ENCODE measurements at regions of chr19 and their contacts with region 1.

Region 1: DNA sequence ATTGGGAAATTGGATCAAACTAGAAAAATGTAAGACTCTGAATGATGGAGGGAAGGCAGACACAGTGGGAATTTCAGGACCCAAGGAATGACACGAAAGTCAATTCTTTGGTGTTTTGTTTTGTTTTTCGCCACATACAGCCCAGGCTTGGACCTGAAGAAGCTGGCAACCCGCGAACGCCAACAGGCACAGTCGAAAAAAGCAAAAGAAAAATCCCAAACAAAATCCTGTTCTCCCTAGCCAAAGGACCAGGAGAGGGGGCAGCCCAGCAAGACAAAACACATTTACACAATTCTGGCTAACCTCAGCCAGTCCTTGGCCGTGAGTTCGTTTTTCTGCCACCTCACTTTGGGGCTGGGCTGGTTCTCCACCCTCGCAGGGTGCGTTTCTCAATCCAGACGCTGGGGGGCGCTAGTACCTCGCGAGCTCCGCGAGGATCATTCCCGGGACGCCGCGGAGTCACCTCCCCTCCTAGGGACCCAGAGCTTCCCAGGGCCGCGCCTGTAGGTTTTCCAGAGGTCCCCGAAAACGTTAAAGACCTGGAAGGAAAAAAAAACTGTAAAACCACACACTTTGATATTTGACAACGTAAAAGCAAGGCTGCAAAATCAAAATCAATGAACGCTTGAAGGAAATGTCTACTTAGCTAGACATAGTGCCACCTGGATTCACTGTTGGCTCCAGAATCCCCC is 34.9 kb upstream of the TPM4 start:
- DNase-seq: peak; percentile 52
- ATAC-seq: peak; percentile 99
- H3K4me3 ChIP-seq: no peak overlapping the region
- H3K27ac ChIP-seq: peak overlapping the region; percentile 12
- H3K4me1 ChIP-seq: peaks cover 2% of the 10 kb centered on the region
- H3K27me3 ChIP-seq: no peaks in the 10 kb centered on the region
- CTCF ChIP-seq: peak; percentile 96
- POLR2A ChIP-seq: no peak
- RAD21 ChIP-seq: peak; percentile 92

Region 2: GRCh38 chr19:15629003-15629880 is 412.2 kb before region 1 on chr19:
- CTCF ChIA-PET with region 1: no interaction called
- POLR2A ChIA-PET with region 1: no interaction called
- dilution Hi-C with region 1: no loop called
- in situ Hi-C with region 1: no loop called
- intact Hi-C with region 1: loop called (anchors 2 kb)
- DNase-seq: peak; percentile 19
- ATAC-seq: peak; percentile 92
- H3K4me3 ChIP-seq: no peak overlapping the region
- H3K27ac ChIP-seq: no peak overlapping the region
- H3K4me1 ChIP-seq: no peaks in the 10 kb centered on the region
- H3K27me3 ChIP-seq: no peaks in the 10 kb centered on the region
- CTCF ChIP-seq: peak; percentile 73
- POLR2A ChIP-seq: no peak
- RAD21 ChIP-seq: peak; percentile 75

Region 3: DNA sequence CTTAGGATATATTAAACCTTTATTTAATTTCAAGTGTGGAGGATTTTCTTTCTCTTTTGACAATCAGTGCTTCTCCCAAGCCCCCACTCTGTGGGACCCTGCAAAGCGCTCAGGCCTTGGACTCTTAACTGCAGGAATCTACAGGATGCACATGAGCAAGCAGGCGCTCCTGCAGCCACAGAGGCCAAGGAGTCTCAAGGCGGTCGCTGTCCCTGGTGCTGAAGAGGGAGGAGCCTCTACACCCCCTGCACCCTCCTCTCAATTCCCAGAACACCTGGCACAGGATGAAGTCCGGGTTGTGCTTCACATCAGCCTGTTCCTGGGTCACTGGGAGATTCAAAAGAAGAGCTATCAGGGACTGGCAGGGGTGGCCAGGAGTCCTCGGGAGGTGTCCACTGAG is 79.1 kb before region 1 on chr19:
- CTCF ChIA-PET with region 1: no interaction called
- POLR2A ChIA-PET with region 1: no interaction called
- dilution Hi-C with region 1: no loop called
- in situ Hi-C with region 1: no loop called
- intact Hi-C with region 1: no loop called
- DNase-seq: no peak
- ATAC-seq: no peak
- H3K4me3 ChIP-seq: no peak overlapping the region
- H3K27ac ChIP-seq: no peak overlapping the region
- H3K4me1 ChIP-seq: no peaks in the 10 kb centered on the region
- H3K27me3 ChIP-seq: no peaks in the 10 kb centered on the region
- CTCF ChIP-seq: no peak
- POLR2A ChIP-seq: no peak
- RAD21 ChIP-seq: no peak

Region 4: DNA sequence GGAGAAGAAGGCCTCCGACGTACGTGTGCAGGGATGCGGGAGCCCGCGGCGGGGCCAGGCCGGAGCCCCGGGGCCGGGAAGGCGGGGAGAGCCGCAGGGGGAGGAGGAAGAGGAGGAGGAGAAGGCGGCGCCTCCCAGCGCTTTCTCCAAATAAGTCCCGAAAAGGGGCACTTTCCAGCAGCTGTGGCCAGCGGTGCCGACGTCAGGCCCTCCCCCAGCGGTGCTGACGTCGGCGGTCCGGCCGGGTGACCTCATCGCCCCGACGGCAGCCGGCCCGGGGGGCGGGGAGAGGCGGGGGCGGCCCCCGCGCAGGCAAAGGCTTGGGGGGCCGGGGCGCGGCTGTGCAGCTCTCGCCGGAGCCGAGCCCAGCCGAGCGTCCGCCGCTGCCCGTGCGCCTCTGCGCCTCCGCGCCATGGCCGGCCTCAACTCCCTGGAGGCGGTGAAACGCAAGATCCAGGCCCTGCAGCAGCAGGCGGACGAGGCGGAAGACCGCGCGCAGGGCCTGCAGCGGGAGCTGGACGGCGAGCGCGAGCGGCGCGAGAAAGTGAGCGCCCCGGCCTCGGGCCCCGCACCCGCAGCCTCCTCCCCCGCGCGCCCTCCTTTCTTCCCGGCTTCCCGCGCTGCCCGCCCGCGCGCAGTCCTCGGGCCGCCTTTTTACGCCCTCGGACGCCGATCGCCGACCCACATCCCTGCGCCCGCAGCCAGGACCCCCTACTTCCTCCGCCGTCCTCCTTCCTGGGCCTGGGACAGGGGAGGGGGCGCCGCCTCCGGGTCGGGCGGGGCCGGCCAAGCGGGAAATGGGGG is 34.9 kb after region 1 on chr19 and contains the start of gene TPM4:
- CTCF ChIA-PET with region 1: interaction called, 3 read pairs
- POLR2A ChIA-PET with region 1: interaction called, 3 read pairs
- dilution Hi-C with region 1: no loop called
- in situ Hi-C with region 1: no loop called
- intact Hi-C with region 1: loop called (anchors 5 kb)
- DNase-seq: peak; percentile 96
- ATAC-seq: peak; percentile 80
- H3K4me3 ChIP-seq: peak within 1 kb of the TSS; percentile 97
- H3K27ac ChIP-seq: peak within 1 kb of the TSS; percentile 98
- H3K4me1 ChIP-seq: peaks cover 16% of the 10 kb centered on the region
- H3K27me3 ChIP-seq: no peaks in the 10 kb centered on the region
- CTCF ChIP-seq: no peak
- POLR2A ChIP-seq: peak; percentile 98
- RAD21 ChIP-seq: 0 out of 2 replicates have a peak, but pooled peaks have one; percentile 12
- total RNA-seq, gene TPM4: 1,075 and 1,562 TPM in 2 replicates

Region 5: GRCh38 chr19:16175954-16176353 is 134.5 kb after region 1 on chr19:
- CTCF ChIA-PET with region 1: interaction called, 19 read pairs
- POLR2A ChIA-PET with region 1: no interaction called
- dilution Hi-C with region 1: no loop called
- in situ Hi-C with region 1: loop called (anchors 5 kb)
- intact Hi-C with region 1: no loop called
- DNase-seq: no peak
- ATAC-seq: no peak
- H3K4me3 ChIP-seq: no peak overlapping the region
- H3K27ac ChIP-seq: no peak overlapping the region
- H3K4me1 ChIP-seq: peaks cover 4% of the 10 kb centered on the region; the same call in 1 of the 2 replicates
- H3K27me3 ChIP-seq: no peaks in the 10 kb centered on the region
- CTCF ChIP-seq: no peak
- POLR2A ChIP-seq: no peak
- RAD21 ChIP-seq: no peak

Region 6: GRCh38 chr19:16283210-16284061 is 242.0 kb after region 1 on chr19:
- CTCF ChIA-PET with region 1: no interaction called
- POLR2A ChIA-PET with region 1: no interaction called
- dilution Hi-C with region 1: no loop called
- in situ Hi-C with region 1: no loop called
- intact Hi-C with region 1: no loop called
- DNase-seq: peak; percentile 70
- ATAC-seq: peak; percentile 57
- H3K4me3 ChIP-seq: no peak overlapping the region
- H3K27ac ChIP-seq: peak overlapping the region; percentile 42
- H3K4me1 ChIP-seq: peaks cover 6% of the 10 kb centered on the region
- H3K27me3 ChIP-seq: peaks cover 15% of the 10 kb centered on the region
- CTCF ChIP-seq: no peak
- POLR2A ChIP-seq: no peak
- RAD21 ChIP-seq: no peak

Region 7: GRCh38 chr19:16382775-16383543 is 341.5 kb after region 1 on chr19:
- CTCF ChIA-PET with region 1: no interaction called
- POLR2A ChIA-PET with region 1: interaction called, 7 read pairs
- dilution Hi-C with region 1: no loop called
- in situ Hi-C with region 1: loop called (anchors 10 kb)
- intact Hi-C with region 1: no loop called
- DNase-seq: peak; percentile 85
- ATAC-seq: peak; percentile 92
- H3K4me3 ChIP-seq: no peak overlapping the region
- H3K27ac ChIP-seq: no peak overlapping the region
- H3K4me1 ChIP-seq: peaks cover 2% of the 10 kb centered on the region; the same call in 1 of the 2 replicates
- H3K27me3 ChIP-seq: no peaks in the 10 kb centered on the region
- CTCF ChIP-seq: peak; percentile 88
- POLR2A ChIP-seq: no peak
- RAD21 ChIP-seq: peak; percentile 99

Region 8: GRCh38 chr19:17718947-17719711 is 1677.7 kb after region 1 on chr19 and contains the start of gene MAP1S:
- CTCF ChIA-PET with region 1: no interaction called
- POLR2A ChIA-PET with region 1: no interaction called
- dilution Hi-C with region 1: no loop called
- in situ Hi-C with region 1: no loop called
- intact Hi-C with region 1: no loop called
- DNase-seq: peak; percentile 25
- ATAC-seq: peak; percentile 91
- H3K4me3 ChIP-seq: peak within 1 kb of the TSS; percentile 70
- H3K27ac ChIP-seq: peak within 1 kb of the TSS; percentile 68
- H3K4me1 ChIP-seq: peaks cover 13% of the 10 kb centered on the region
- H3K27me3 ChIP-seq: no peaks in the 10 kb centered on the region
- CTCF ChIP-seq: no peak
- POLR2A ChIP-seq: peak; percentile 82
- RAD21 ChIP-seq: no peak
- total RNA-seq, gene MAP1S: 6.1 and 10.6 TPM in 2 replicates